Activated T-helper 2 cell treated with anti-CD3 and anti-CD28 coated beads, Interferon-gamma antibody, Interleukin-2, Interleukin-4, amounts not matched to agents 10 μg/mL and 5 μg/mL and 100 μg/mL, durations not matched to agents 14 hours and 24 hours and 36 hours (primary cell): ENCODE measurements at regions of chr1 and their contacts with region 1.

Region 1: GRCh38 chr1:61724813-61725694 is at the start of gene TM2D1:
- DNase-seq: peak; percentile 84
- H3K4me3 Mint-ChIP-seq: peak within 1 kb of the TSS; percentile 89
- H3K27ac Mint-ChIP-seq: peak within 1 kb of the TSS; percentile 92
- H3K4me1 Mint-ChIP-seq: peaks cover 14% of the 10 kb centered on the region
- H3K27me3 Mint-ChIP-seq: no peaks in the 10 kb centered on the region
- total RNA-seq, gene TM2D1: 32.3 and 32.6 TPM in 2 replicates

Region 2: DNA sequence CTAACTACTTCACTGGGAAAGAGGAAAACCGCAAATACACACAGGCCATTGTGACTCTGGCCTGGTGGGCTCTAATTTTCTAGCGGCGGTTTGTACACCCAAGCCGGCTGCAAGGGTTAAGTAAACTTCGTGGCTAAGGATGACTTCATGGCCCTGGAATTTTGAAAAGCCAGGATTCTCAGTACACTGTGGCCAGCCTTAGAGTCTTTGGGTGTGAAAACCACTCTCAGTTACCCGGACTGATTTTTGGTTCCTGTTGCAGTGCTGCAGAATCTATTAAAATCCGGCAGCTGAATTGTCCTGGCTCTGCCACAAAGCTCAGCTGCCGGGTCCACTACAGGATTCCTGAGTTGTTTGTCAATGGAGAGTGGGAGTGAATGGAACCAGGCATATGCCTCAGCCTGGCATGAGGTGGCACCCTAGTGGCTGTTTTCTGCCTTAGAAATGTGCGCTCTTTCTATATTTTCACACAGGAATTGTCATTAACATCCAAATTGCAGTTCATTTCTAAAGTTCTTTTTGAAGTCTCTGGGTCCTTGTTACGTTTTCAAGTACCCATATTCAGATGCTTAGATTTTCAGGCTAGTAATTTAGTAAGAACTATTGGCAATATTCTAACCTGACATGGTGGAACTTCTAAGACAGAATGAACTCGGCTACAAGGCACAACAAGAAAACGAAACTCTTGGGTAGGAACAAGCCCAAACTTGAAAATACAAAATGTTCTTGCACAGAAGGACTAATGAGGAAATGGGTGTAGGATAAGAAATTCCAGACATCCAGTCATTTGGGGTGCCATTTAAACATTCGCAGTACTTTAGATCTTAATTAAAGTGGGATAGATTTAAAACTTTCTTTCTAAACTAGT is 386.8 kb before region 1 on chr1:
- intact Hi-C with region 1: loop called (anchors 10 kb)
- DNase-seq: no peak
- H3K4me3 Mint-ChIP-seq: no peak overlapping the region
- H3K27ac Mint-ChIP-seq: no peak overlapping the region
- H3K4me1 Mint-ChIP-seq: no peaks in the 10 kb centered on the region
- H3K27me3 Mint-ChIP-seq: peaks cover 49% of the 10 kb centered on the region

Region 3: DNA sequence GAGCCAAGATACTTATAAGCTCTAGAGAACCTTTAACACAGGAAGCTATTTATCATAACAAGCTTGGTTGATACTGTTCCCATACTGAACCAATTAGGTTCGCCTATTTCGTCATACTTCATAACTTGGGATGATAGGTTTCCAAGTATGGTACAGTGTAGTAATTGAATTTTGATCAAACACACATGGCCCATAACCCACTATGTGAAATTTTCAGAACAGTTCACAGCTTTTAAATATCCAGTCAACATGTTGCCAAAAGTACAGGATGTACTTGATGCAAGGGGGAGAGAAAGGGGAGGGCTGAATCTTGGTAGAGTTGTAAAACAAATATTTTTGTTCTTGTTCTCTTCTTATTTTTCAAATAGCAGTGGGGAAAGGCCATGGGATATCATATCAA is 86.8 kb before region 1 on chr1:
- intact Hi-C with region 1: no loop called
- DNase-seq: no peak
- H3K4me3 Mint-ChIP-seq: no peak overlapping the region
- H3K27ac Mint-ChIP-seq: no peak overlapping the region
- H3K4me1 Mint-ChIP-seq: peaks cover 8% of the 10 kb centered on the region
- H3K27me3 Mint-ChIP-seq: peaks cover 9% of the 10 kb centered on the region

Region 4: DNA sequence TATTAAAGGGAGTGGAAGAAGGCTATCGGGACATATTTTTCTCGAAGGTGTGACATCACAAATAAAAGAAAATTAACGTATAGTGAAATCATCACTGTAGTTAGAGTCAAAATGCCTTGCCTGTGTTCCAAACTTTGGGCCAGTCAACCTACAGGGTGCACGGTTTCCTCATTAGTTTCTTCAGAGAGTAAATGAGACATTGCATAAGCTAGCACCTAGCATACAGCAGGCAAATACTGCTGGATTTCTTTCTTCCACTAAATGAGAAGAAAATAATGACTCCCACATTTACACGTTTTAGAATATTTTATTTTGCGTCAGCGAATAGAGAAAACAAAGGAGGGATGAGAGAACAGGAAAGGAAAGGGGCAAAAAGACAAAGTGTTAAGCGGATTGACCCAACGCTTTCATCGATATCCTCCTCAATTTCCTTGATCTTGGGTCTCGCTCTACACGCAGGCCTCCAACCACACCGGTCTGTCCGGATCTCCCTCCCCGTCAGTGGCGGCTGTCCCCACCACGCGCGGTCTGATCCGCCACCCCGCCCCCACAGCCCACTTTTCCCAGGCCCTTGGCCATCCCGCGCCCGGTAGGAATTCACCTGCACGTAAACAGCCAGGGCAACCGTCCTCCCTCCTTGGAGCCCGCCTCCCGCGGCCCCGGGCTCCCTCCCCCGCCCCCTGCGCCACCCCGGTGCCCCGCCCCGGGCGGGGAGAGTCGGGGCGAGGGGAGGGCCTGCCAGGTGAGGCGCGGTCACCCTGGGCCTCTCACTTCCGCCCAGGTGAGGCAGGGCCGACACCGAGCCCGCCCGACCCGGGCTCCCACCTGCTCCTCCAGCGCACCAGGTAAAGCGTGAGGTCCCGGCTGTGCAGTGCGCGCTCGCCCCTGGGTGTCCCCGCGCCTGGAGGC is 16.9 kb after region 1 on chr1 and contains the start of gene PATJ:
- intact Hi-C with region 1: loop called (anchors 2 kb)
- DNase-seq: peak; percentile 31
- H3K4me3 Mint-ChIP-seq: peak within 1 kb of the TSS; percentile 90
- H3K27ac Mint-ChIP-seq: peak within 1 kb of the TSS; percentile 78
- H3K4me1 Mint-ChIP-seq: peaks cover 11% of the 10 kb centered on the region
- H3K27me3 Mint-ChIP-seq: peaks cover 1% of the 10 kb centered on the region
- total RNA-seq, gene PATJ: 3.3 and 3.4 TPM in 2 replicates

Region 5: DNA sequence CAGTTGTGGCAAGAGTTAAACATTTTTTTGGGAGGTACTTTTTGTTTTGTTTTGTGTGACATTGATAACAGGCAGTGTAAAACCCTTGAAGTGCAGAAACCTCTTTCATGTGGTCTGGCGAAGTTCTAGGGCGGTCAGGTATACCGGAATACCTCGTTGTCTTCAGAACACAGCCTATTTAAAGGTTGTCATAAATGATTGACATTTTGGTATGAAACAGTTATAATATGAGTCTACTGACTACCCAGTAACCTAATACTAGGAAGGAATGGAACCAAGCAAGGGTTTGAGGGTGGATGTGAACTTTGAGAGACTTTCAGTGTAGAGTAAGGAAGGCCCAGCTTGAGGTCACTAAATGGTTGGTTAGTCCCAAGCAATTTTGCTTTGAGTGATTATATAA is 57.7 kb after region 1 on chr1:
- intact Hi-C with region 1: loop called (anchors 2 kb)
- DNase-seq: peak; percentile 50
- H3K4me3 Mint-ChIP-seq: peak overlapping the region; percentile 54
- H3K27ac Mint-ChIP-seq: peak overlapping the region; percentile 71
- H3K4me1 Mint-ChIP-seq: peaks cover 25% of the 10 kb centered on the region
- H3K27me3 Mint-ChIP-seq: no peaks in the 10 kb centered on the region

Region 6: DNA sequence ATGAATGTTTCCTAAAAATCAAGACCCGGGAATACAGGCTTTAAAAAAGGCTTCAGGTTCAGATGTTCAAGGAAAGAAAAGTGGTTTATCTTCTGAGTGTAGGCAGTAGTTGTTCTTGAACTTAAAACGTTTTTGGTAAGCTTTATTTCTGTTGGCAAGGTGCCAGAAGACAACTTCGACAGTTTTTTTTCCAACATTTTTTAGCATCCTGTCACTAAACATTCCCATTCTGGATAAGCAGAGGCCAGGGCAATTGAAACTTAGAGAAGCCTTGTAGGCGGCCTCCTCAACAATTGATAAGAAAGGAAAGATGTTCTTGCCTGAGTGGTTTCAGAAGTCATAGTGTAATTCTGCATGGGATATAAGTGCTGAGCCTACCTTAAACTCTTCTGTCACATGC is 83.9 kb after region 1 on chr1:
- intact Hi-C with region 1: no loop called
- DNase-seq: no peak
- H3K4me3 Mint-ChIP-seq: no peak overlapping the region
- H3K27ac Mint-ChIP-seq: no peak overlapping the region
- H3K4me1 Mint-ChIP-seq: no peaks in the 10 kb centered on the region
- H3K27me3 Mint-ChIP-seq: no peaks in the 10 kb centered on the region

Region 7: GRCh38 chr1:62783723-62784508 is 1058.9 kb after region 1 on chr1 and contains the start of gene ATG4C:
- intact Hi-C with region 1: loop called (anchors 5 kb)
- DNase-seq: peak; percentile 90
- H3K4me3 Mint-ChIP-seq: no peak within 1 kb of the TSS
- H3K27ac Mint-ChIP-seq: no peak within 1 kb of the TSS
- H3K4me1 Mint-ChIP-seq: peaks cover 3% of the 10 kb centered on the region
- H3K27me3 Mint-ChIP-seq: peaks cover 14% of the 10 kb centered on the region
- total RNA-seq, gene ATG4C: 8.2 and 10.1 TPM in 2 replicates